ENCODE measurements at regions of chr3 and their contacts with region 1.

Region 1: GRCh38 chr3:12729051-12729651 is 29.9 kb downstream of the TMEM40 start:
- DNase-seq: no peak
- ATAC-seq: peak; percentile 89

Region 2: GRCh38 chr3:12629560-12629959 is 99.6 kb before region 1 on chr3:
- intact Hi-C with region 1: no loop called
- DNase-seq: no peak
- ATAC-seq: peak; percentile 82

Region 3: DNA sequence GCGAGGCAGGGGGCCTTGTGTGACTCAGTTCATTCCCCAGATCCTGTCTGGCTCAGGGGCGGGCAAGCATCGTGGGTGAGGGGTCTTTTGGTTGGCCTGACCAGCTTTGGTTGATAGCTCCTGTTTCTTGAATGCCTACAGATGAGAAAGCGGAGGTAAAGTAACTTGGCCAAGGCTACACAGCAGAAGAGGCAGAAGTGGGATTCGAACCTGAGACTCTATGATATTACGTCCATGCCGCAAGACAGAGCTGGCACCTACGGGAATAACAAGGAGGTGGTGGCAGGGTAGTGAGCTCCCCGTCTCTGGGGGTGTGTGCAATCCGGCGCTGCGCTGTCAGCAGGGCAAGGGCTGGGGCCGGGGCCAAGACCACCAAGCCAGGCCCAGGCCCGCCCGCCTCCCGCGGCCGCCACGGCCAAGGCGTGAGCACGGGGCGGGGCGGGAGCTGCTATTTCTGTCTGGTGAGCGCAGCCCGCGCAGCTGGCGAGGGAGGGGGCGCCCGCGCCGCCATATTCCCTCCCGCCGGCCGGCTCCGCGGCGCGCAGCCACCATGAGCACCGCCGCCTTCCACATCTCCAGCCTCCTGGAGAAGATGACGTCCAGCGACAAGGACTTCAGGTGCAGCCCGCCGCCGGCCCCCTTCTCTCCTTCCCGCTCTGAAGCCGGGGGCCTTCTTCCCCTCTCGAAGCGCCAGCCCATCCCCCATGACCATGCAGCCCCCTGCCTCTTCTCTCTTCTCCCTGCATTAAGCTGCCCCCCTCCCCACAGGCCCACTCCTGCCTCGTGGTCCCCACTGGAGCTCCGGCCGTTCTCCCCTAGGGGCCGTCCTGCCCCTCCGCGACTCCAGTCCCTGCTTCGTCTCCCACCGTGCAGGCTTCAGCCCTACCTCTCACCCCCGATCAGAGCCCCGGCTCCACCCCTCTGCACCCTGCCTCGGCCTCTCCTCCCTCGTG is 67.3 kb after region 1 on chr3 and contains the start of gene CAND2:
- intact Hi-C with region 1: loop called (anchors 1 kb)
- DNase-seq: peak; percentile 87
- ATAC-seq: peak; percentile 90
- total RNA-seq, gene CAND2: 56.7 TPM

Measured in Right ventricle myocardium inferior (tissue), 1 donor.